ENCODE measurements at regions of chr1 and their contacts with region 1.

Region 1: DNA sequence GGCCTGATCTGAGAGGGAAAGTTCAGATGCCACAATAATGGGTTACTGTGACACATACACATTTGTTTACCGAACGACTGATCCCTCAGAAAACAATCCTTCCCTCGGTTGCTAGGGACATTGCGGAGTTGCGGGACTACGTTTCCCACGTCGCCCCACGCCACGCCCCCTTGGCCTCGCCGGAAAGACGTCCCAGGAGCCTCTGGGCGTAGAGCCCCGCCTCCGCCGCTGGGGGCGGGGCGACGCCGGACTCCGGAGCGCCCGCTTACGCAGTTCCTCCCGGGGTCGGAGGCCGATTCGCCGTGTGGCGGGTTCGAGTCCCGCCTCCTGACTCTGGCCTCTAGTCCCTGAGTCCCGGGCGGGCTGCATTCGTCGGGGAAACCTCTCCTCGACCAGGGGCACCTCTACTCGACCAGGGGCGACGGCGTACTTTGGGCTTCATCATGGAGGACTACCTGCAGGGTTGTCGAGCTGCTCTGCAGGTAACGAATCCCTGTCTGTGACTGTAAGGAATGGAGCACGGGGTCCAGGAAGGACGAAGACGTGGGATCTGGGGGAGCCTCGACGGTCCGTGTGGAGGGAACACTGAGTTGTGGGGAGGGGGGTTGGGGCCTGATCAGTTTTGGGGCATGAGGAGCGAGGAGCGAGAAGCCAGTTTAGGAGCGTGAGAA is at the start of gene PRUNE1:
- DNase-seq: peak; percentile 92 to 98 (median 96)
- H3K4me3 ChIP-seq: peak within 1 kb of the TSS; percentile 47 to 97 (median 83)
- H3K27ac ChIP-seq: peak within 1 kb of the TSS; percentile 85 to 100 (median 97)
- H3K27me3 ChIP-seq: no peaks in the 10 kb centered on the region
- CTCF ChIP-seq: peak in 47 of 56 donors; percentile 14 to 61 (median 38)
- total RNA-seq, gene PRUNE1: 12.4 to 27.8 (median 20.6) TPM

Region 2: DNA sequence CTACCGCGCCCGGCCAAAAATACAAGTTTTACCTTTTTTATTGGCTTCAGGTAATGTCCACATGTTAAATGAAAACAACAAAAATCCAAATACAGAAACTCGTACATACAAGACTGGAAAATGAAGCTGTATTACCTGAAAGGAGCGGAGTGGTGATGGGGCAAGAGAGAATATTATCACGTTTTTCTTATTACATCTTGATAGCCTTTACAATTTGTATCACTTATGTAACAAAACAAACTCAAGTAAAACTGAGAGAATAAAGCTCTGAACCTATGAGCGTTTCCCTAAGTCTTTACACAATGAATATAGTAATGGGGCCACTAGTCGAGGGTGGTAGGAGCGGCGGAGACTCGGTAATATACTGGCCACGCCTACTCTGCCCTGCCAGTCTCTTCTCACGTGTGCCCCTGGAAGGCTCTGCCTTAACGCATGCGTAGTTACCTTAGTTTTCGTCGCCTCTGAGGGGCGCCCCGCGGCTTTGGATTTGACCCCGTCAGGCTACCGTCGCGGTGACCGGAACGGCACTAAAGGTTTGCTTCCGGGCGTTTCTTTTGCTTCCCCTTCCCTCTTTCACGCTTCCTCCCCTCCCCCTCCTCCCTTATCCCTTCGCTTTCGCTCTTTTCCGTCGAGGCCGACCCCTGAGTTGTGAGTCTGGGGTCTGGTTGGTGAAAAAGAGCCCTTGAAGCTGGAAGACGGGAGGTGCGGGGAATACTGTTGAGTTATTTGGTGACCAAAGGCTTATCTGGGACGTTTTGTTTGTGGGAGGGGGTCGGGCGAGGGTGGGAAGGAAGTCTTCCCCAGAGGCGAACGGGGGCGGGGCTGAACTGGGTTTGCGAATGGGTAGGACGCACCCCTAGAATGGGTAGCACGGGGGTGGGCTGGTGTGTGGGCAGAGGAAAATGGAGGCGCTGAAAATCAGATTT is 82.2 kb before region 1 on chr1 and contains the start of gene SETDB1:
- intact Hi-C with region 1: loop called in 1 of 2 experiments (anchors 2 kb)
- DNase-seq: peak; percentile 85 to 93 (median 90)
- H3K4me3 ChIP-seq: peak within 1 kb of the TSS; percentile 47 to 94 (median 75)
- H3K27ac ChIP-seq: peak within 1 kb of the TSS in 58 of 59 donors; percentile 3 to 92 (median 80)
- H3K27me3 ChIP-seq: no peaks in the 10 kb centered on the region
- CTCF ChIP-seq: peak in 52 of 56 donors; percentile 20 to 71 (median 47)
- total RNA-seq, gene SETDB1: 29.7 to 62.6 (median 42.4) TPM

Region 3: GRCh38 chr1:150979092-150980056 is 29.0 kb before region 1 on chr1:
- intact Hi-C with region 1: loop called in 1 of 2 experiments (anchors 1 kb)
- DNase-seq: peak; percentile 68 to 93 (median 80)
- H3K4me3 ChIP-seq: peak overlapping the region in 56 of 59 donors; percentile 0 to 64 (median 42)
- H3K27ac ChIP-seq: peak overlapping the region in 58 of 59 donors; percentile 2 to 99 (median 76)
- H3K27me3 ChIP-seq: no peaks in the 10 kb centered on the region
- CTCF ChIP-seq: peak; percentile 94 to 100 (median 100)

Region 4: DNA sequence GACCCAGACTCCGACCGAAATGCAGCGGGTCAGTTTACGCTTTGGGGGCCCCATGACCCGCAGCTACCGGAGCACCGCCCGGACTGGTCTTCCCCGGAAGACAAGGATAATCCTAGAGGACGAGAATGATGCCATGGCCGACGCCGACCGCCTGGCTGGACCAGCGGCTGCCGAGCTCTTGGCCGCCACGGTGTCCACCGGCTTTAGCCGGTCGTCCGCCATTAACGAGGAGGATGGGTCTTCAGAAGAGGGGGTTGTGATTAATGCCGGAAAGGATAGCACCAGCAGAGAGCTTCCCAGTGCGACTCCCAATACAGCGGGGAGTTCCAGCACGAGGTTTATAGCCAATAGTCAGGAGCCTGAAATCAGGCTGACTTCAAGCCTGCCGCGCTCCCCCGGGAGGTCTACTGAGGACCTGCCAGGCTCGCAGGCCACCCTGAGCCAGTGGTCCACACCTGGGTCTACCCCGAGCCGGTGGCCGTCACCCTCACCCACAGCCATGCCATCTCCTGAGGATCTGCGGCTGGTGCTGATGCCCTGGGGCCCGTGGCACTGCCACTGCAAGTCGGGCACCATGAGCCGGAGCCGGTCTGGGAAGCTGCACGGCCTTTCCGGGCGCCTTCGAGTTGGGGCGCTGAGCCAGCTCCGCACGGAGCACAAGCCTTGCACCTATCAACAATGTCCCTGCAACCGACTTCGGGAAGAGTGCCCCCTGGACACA is 39.8 kb after region 1 on chr1:
- intact Hi-C with region 1: no loop called
- DNase-seq: peak; percentile 53 to 84 (median 72)
- H3K4me3 ChIP-seq: peak overlapping the region; percentile 66 to 99 (median 88)
- H3K27ac ChIP-seq: peak overlapping the region; percentile 83 to 99 (median 94)
- H3K27me3 ChIP-seq: no peaks in the 10 kb centered on the region
- CTCF ChIP-seq: peak in 37 of 56 donors; percentile 19 to 62 (median 52)

Region 5: GRCh38 chr1:151059078-151059907 is 51.0 kb after region 1 on chr1 and contains the start of gene CDC42SE1:
- intact Hi-C with region 1: loop called in 1 of 2 experiments (anchors 5 kb)
- DNase-seq: peak; percentile 55 to 90 (median 82)
- H3K4me3 ChIP-seq: peak within 1 kb of the TSS; percentile 62 to 99 (median 87)
- H3K27ac ChIP-seq: peak within 1 kb of the TSS; percentile 82 to 99 (median 96)
- H3K27me3 ChIP-seq: no peaks in the 10 kb centered on the region
- CTCF ChIP-seq: peak; percentile 57 to 92 (median 76)
- total RNA-seq, gene CDC42SE1: 46.3 to 92.3 (median 62.6) TPM

Region 6: GRCh38 chr1:151070474-151071276 is 62.4 kb after region 1 on chr1 and contains the start of gene GABPB2:
- intact Hi-C with region 1: loop called in 1 of 2 experiments (anchors 2 kb)
- DNase-seq: peak; percentile 84 to 94 (median 90)
- H3K4me3 ChIP-seq: peak within 1 kb of the TSS; percentile 52 to 98 (median 81)
- H3K27ac ChIP-seq: peak within 1 kb of the TSS; percentile 97 to 100 (median 100)
- H3K27me3 ChIP-seq: no peaks in the 10 kb centered on the region
- CTCF ChIP-seq: peak; percentile 56 to 98 (median 87)
- total RNA-seq, gene GABPB2: 11.6 to 37.2 (median 20.4) TPM

Region 7: GRCh38 chr1:151165738-151166505 is 157.6 kb after region 1 on chr1 and contains the starts of genes LYSMD1 and SCNM1:
- intact Hi-C with region 1: loop called in 1 of 2 experiments (anchors 5 kb)
- DNase-seq: peak; percentile 94 to 98 (median 96)
- H3K4me3 ChIP-seq: peak within 1 kb of the TSS; percentile 57 to 98 (median 81)
- H3K27ac ChIP-seq: peak within 1 kb of the TSS; percentile 30 to 98 (median 89)
- H3K27me3 ChIP-seq: no peaks in the 10 kb centered on the region
- CTCF ChIP-seq: peak in 46 of 56 donors; percentile 7 to 64 (median 40)
- total RNA-seq, gene LYSMD1: 11.8 to 24.4 (median 17.1) TPM
- total RNA-seq, gene SCNM1: 20.8 to 38.5 (median 28.7) TPM